Gastrocnemius medialis (tissue), 4 donors: ENCODE measurements at regions of chr1 and their contacts with region 1.

Region 1: DNA sequence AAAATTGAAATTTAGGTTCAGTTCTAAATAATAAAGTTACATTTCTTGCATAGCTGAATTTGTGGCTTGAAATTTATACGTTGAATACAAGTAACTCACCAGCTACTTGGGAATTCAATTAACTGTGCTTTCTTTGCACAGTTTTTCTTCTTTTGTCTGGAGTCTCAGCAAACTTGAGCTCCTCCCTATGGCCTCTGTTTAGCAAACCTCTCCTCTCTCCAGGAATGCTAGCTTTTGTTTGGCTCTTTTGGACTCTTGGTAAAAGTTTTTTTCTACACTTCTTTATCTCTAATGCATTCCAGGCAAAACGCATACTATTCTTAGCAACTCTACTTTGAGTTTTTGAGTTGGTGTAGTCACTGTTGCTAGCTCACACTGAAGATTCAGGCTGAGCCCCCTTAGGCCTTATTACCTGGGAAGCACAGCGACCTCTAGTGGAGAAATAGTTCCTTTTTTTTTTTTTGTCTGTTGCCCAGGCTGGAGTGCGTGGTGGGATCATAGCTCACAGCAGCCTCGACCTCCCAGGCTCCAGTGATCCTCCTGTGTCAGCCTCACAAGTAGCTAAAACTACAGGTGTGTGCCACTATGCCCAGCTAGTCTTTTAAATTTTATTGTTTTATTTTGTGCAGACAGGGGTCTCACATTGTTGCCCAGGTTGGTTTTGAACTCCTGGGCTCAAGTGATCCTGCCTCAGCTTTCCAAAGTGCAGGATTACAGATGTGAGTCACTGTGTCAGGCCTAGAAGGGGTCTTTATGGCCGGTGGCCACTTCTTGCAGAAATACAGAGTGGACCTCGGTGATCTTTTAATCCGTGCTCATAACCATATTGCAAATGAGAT is 61.7 kb downstream of the CASQ2 start:
- DNase-seq: no peak
- ATAC-seq: no peak
- H3K4me3 ChIP-seq: no peak overlapping the region
- H3K27ac ChIP-seq: no peak overlapping the region
- H3K4me1 ChIP-seq: no peaks in the 10 kb centered on the region
- H3K27me3 ChIP-seq: no peaks in the 10 kb centered on the region
- CTCF ChIP-seq: peak; percentile 20 to 74 (median 50)
- POLR2A ChIP-seq: no peak

Region 2: DNA sequence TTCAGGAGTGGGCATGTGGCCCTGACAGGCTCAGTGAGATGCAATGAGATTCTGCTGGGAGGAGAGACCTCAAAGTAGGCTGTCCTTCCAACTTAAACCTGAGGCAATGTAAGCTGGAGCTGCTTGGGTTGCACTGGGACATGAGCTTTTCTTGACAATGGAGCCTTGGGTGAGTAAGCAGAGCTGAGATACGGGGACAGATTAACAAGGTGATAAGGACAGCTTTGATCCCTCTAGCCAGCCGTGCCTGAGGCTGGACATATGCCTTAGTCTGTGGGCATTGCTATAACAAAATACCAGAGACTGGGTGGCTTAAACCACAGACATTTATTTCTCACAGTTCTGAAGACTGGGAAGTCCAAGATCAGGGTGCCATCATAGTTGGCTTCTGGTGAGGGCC is 350.4 kb before region 1 on chr1:
- in situ Hi-C with region 1: no loop called
- intact Hi-C with region 1: no loop called
- DNase-seq: no peak
- ATAC-seq: no peak
- H3K4me3 ChIP-seq: no peak overlapping the region
- H3K27ac ChIP-seq: no peak overlapping the region
- H3K4me1 ChIP-seq: no peaks in the 10 kb centered on the region
- H3K27me3 ChIP-seq: no peaks in the 10 kb centered on the region
- CTCF ChIP-seq: no peak
- POLR2A ChIP-seq: no peak

Region 3: GRCh38 chr1:115609021-115609420 is 97.8 kb before region 1 on chr1:
- in situ Hi-C with region 1: loop called in 3 of 4 experiments (anchors 5 to 10 kb)
- intact Hi-C with region 1: loop called (anchors 2 kb)
- DNase-seq: no peak
- ATAC-seq: no peak
- H3K4me3 ChIP-seq: no peak overlapping the region
- H3K27ac ChIP-seq: no peak overlapping the region
- H3K4me1 ChIP-seq: no peaks in the 10 kb centered on the region
- H3K27me3 ChIP-seq: no peaks in the 10 kb centered on the region
- CTCF ChIP-seq: no peak
- POLR2A ChIP-seq: no peak

Region 4: GRCh38 chr1:115642168-115643072 is 64.4 kb before region 1 on chr1:
- in situ Hi-C with region 1: no loop called
- intact Hi-C with region 1: loop called (anchors 10 kb)
- DNase-seq: no peak
- ATAC-seq: peak; percentile 66 to 78
- H3K4me3 ChIP-seq: peak overlapping the region; percentile 65 to 94 (median 73)
- H3K27ac ChIP-seq: peak overlapping the region in 1 of 4 donors; percentile 41
- H3K4me1 ChIP-seq: peaks cover 5 to 6% of the 10 kb centered on the region in 2 donors
- H3K27me3 ChIP-seq: no peaks in the 10 kb centered on the region
- CTCF ChIP-seq: no peak
- POLR2A ChIP-seq: no peak